Naive thymus-derived CD8-positive, alpha-beta T cell (primary cell): ENCODE measurements at regions of chr7 and their contacts with region 1.

Region 1: DNA sequence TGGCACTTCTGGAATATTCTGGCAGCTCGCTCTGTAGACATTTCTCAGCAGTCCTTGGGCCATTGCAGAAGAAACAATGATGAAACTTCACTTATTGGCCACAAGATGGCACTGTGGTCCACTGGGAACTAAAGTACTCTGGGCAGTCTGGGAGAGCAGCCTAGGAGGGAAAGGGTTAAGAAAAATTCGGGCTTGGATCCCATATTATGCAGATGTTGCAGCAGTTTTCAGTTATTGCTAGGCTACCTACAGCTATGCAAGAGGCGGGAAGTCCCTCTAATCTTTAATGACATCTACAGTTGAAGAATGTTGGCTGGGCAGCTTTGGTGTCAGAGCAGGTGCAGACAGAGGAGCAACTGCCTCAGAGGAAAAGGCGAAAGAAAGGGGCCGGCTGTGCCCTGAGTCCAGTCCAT is 201.7 kb upstream of the PRSS58 start:
- DNase-seq: peak in 6 of 10 donors; percentile 24 to 44 (median 36)
- ATAC-seq: peak; percentile 43 to 49
- H3K4me3 Mint-ChIP-seq: peak overlapping the region in 8 of 10 donors; percentile 28 to 77 (median 45)
- H3K27ac Mint-ChIP-seq: peak overlapping the region; percentile 1 to 89 (median 70)
- H3K4me1 Mint-ChIP-seq: peaks cover 21 to 52% (median 50%) of the 10 kb centered on the region in 4 donors
- H3K27me3 Mint-ChIP-seq: no peaks in the 10 kb centered on the region

Region 2: GRCh38 chr7:142153400-142153799 is 306.2 kb before region 1 on chr7:
- POLR2A ChIA-PET with region 1: no interaction called
- DNase-seq: no peak
- ATAC-seq: no peak
- H3K4me3 Mint-ChIP-seq: no peak overlapping the region
- H3K27ac Mint-ChIP-seq: no peak overlapping the region
- H3K4me1 Mint-ChIP-seq: no peaks in the 10 kb centered on the region
- H3K27me3 Mint-ChIP-seq: peaks cover 0 to 14% (median 6%) of the 10 kb centered on the region in 5 donors

Region 3: DNA sequence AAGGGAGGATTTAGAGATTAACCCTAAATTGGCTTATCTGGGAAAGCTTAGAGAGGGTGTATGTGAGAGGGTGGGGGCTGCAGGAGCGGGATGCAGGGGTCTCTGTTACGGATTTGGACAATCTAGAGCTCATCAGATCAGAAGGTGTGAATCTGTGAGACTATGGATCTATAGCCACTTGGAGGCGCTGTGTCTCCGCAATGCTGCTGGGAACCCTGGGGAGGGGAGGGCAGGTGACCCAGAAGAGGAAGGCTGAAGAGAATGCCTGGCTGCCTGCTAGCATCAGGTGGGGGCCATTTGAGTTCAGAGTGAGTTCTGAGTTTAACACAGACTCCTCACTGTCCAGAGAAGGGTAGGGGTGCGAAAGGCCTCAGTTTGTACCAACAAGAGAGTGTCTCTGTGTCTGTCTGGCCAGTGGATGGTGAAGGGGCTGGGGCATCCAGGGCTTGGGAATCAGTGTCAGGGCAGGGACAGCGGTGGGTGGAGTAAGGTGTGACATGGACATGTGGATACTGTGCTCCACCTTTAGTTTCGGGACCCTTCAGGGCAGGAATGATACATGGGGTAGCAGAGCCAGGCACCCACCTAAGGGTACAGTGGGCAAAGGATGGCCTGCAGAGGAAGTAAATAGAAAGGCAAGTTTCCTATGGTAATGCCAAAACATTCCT is 14.4 kb before region 1 on chr7:
- POLR2A ChIA-PET with region 1: no interaction called
- DNase-seq: peak in 6 of 10 donors; percentile 27 to 69 (median 38)
- ATAC-seq: peak; percentile 65 to 72
- H3K4me3 Mint-ChIP-seq: peak overlapping the region in 3 of 10 donors; percentile 19 to 55 (median 24)
- H3K27ac Mint-ChIP-seq: peak overlapping the region in 8 of 10 donors; percentile 52 to 94 (median 78)
- H3K4me1 Mint-ChIP-seq: peaks cover 16 to 39% (median 28%) of the 10 kb centered on the region in 4 donors
- H3K27me3 Mint-ChIP-seq: peaks cover 0 to 4% (median 0%) of the 10 kb centered on the region in 5 donors

Region 4: DNA sequence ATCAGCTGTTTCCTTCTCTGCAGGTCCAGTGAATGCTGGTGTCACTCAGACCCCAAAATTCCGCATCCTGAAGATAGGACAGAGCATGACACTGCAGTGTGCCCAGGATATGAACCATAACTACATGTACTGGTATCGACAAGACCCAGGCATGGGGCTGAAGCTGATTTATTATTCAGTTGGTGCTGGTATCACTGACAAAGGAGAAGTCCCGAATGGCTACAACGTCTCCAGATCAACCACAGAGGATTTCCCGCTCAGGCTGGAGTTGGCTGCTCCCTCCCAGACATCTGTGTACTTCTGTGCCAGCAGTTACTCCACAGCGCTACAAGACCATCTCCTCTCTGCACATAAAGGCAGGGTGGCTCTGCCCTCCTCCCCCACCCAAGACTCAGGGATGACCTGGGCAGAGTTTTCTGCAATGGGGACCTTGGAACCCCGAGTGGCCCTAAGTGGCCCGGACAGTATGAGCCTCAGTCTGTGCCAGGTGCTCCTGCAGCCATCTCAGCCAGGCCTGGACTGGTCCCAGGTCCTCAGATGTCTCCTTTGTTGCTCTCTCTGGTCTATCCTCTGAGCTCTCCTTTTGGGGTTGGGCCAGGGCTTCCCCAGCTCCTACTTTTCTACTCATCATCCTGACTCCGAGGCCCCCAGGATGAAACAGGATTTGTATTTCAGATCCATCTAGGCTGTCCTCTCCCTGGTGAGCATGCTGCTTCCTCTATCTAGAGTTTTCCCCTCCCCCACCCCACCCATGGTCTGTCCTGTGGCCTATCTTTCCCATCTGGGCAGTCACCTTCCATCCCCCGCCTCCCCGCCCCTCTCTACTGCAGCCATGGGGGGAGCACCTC is 10.4 kb after region 1 on chr7:
- POLR2A ChIA-PET with region 1: interaction called, 13 read pairs
- DNase-seq: no peak
- ATAC-seq: no peak
- H3K4me3 Mint-ChIP-seq: peak overlapping the region in 8 of 10 donors; percentile 52 to 80 (median 62)
- H3K27ac Mint-ChIP-seq: peak overlapping the region in 8 of 10 donors; percentile 66 to 90 (median 74)
- H3K4me1 Mint-ChIP-seq: peaks cover 36 to 76% (median 69%) of the 10 kb centered on the region in 4 donors
- H3K27me3 Mint-ChIP-seq: no peaks in the 10 kb centered on the region

Region 5: GRCh38 chr7:142523821-142524460 is 64.4 kb after region 1 on chr7:
- POLR2A ChIA-PET with region 1: interaction called, 12 read pairs
- DNase-seq: no peak
- ATAC-seq: no peak
- H3K4me3 Mint-ChIP-seq: no peak overlapping the region
- H3K27ac Mint-ChIP-seq: peak overlapping the region in 6 of 10 donors; percentile 5 to 71 (median 29)
- H3K4me1 Mint-ChIP-seq: peaks cover 10 to 24% (median 17%) of the 10 kb centered on the region in 4 donors
- H3K27me3 Mint-ChIP-seq: no peaks in the 10 kb centered on the region